GM12878 (cell line): ENCODE measurements at regions of chr2 and their contacts with region 1.

Region 1: DNA sequence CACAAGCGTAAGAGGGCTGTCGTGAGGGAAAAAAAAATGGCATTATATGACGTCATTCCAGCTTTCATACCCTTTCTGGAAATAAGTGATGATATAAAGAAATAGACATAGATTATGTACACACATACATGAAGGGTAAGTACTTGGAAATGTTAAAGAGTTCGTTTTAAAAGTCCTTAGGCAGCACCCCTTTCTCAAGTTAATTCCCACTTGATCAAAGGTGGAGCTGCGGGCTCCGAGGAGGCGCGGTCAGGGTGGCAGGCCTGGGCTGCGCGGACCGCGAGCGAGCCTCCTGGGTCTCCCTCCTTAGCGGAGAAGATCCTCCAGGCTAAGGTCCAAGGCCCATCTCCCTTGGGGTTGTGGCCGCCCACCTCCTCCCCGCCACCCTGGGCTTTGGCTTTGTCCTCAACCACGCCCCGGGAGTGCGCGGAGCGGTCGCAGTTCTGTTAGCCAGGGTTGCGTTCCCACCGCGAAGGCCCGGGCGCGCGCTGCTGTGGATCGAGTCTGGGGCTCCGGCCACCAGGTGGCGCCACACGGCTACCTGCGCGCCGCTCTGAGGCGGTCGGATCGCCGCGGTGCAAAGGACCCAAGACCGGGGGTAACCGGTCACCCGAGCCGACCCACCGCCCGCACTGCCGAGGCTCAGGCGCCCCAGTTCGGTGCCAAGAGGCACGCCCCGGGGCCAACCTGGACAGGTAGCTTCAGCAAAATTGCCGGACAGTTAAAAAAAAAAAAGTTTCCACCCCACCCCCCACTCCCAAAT is 66.8 kb downstream of the HNRNPLL start:
- DNase-seq: no peak
- ATAC-seq: peak; percentile 91
- H3K4me3 ChIP-seq: 0 out of 2 replicates have a peak overlapping the region, but pooled peaks have one; percentile 8
- H3K27ac ChIP-seq: no peak overlapping the region
- H3K4me1 ChIP-seq: peaks cover 14% of the 10 kb centered on the region
- H3K27me3 ChIP-seq: no peaks in the 10 kb centered on the region
- CTCF ChIP-seq: peak; percentile 73 to 87 (median 87)
- EP300 ChIP-seq: no peak
- POLR2A ChIP-seq: no peak
- RAD21 ChIP-seq: peak; percentile 75

Region 2: GRCh38 chr2:38523728-38524437 is 12.0 kb before region 1 on chr2:
- CTCF ChIA-PET with region 1: interaction called, 7 read pairs
- POLR2A ChIA-PET with region 1: interaction called, 3 read pairs
- RAD21 ChIA-PET with region 1: no interaction called
- SMC1A ChIA-PET with region 1: interaction called, 10 read pairs
- in situ Hi-C with region 1: no loop called
- intact Hi-C with region 1: no loop called
- DNase-seq: no peak
- ATAC-seq: no peak
- H3K4me3 ChIP-seq: no peak overlapping the region
- H3K27ac ChIP-seq: no peak overlapping the region
- H3K4me1 ChIP-seq: peaks cover 3% of the 10 kb centered on the region; the same call in 1 of the 2 replicates
- H3K27me3 ChIP-seq: peaks cover 0 to 2% of the 10 kb centered on the region in 2 experiments; a peak in 1 of 4 replicates
- CTCF ChIP-seq: no peak
- EP300 ChIP-seq: no peak
- POLR2A ChIP-seq: no peak
- RAD21 ChIP-seq: no peak

Region 3: GRCh38 chr2:38549071-38549704 is 13.3 kb after region 1 on chr2:
- CTCF ChIA-PET with region 1: interaction called, 14 read pairs
- POLR2A ChIA-PET with region 1: interaction called, 3 read pairs
- RAD21 ChIA-PET with region 1: no interaction called
- SMC1A ChIA-PET with region 1: interaction called, 5 read pairs
- in situ Hi-C with region 1: no loop called
- intact Hi-C with region 1: no loop called
- DNase-seq: no peak
- ATAC-seq: no peak
- H3K4me3 ChIP-seq: no peak overlapping the region
- H3K27ac ChIP-seq: no peak overlapping the region
- H3K4me1 ChIP-seq: no peaks in the 10 kb centered on the region
- H3K27me3 ChIP-seq: no peaks in the 10 kb centered on the region; a peak in 2 of 4 replicates
- CTCF ChIP-seq: no peak
- EP300 ChIP-seq: no peak
- POLR2A ChIP-seq: no peak
- RAD21 ChIP-seq: no peak

Region 4: DNA sequence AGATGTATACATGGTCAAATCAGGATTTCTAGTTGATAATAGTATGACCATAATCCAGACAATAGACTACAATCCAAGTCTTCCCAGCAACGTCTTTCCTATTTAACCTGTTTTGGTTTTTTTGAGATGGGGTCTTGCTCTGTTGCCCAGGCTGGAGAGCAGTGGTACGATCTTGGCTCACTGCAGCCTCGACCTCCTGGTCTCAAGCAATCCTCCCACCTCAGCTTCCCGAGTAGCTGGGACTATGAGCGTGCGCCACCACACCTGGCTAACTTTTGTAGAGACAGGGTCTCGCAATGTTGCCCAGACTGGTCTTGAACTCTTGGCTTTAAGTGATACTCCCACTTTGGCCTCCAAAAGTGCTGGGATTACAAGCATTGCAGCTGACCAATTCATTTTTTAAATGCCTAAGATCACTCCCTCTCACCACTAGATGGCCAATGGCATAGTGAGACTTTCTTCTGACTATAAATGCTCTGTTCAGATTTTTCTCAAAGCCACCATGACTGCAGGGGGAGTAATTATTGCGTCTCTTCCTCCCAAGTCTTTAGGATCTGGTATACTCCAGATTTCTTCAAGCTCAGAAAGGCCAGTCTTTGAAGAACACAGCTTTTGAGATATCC is 19.2 kb after region 1 on chr2:
- CTCF ChIA-PET with region 1: interaction called, 10 read pairs
- POLR2A ChIA-PET with region 1: no interaction called
- RAD21 ChIA-PET with region 1: no interaction called
- SMC1A ChIA-PET with region 1: interaction called, 6 read pairs
- in situ Hi-C with region 1: no loop called
- intact Hi-C with region 1: no loop called
- DNase-seq: no peak
- ATAC-seq: peak; percentile 76
- H3K4me3 ChIP-seq: no peak overlapping the region
- H3K27ac ChIP-seq: no peak overlapping the region
- H3K4me1 ChIP-seq: no peaks in the 10 kb centered on the region
- H3K27me3 ChIP-seq: no peaks in the 10 kb centered on the region
- CTCF ChIP-seq: peak; percentile 32 to 54 (median 46); a peak in 5 of 6 replicates
- EP300 ChIP-seq: no peak
- POLR2A ChIP-seq: no peak
- RAD21 ChIP-seq: peak; percentile 38

Region 5: GRCh38 chr2:38728694-38729093 is 192.8 kb after region 1 on chr2:
- CTCF ChIA-PET with region 1: interaction called, 6 read pairs
- POLR2A ChIA-PET with region 1: no interaction called
- RAD21 ChIA-PET with region 1: interaction called, 5 read pairs
- SMC1A ChIA-PET with region 1: interaction called, 4 read pairs
- in situ Hi-C with region 1: no loop called
- intact Hi-C with region 1: loop called (anchors 2 kb)
- DNase-seq: no peak
- ATAC-seq: no peak
- H3K4me3 ChIP-seq: no peak overlapping the region
- H3K27ac ChIP-seq: no peak overlapping the region
- H3K4me1 ChIP-seq: peaks cover 2% of the 10 kb centered on the region; the same call in 1 of the 2 replicates
- H3K27me3 ChIP-seq: no peaks in the 10 kb centered on the region
- CTCF ChIP-seq: no peak
- EP300 ChIP-seq: no peak
- POLR2A ChIP-seq: no peak
- RAD21 ChIP-seq: no peak

Region 6: DNA sequence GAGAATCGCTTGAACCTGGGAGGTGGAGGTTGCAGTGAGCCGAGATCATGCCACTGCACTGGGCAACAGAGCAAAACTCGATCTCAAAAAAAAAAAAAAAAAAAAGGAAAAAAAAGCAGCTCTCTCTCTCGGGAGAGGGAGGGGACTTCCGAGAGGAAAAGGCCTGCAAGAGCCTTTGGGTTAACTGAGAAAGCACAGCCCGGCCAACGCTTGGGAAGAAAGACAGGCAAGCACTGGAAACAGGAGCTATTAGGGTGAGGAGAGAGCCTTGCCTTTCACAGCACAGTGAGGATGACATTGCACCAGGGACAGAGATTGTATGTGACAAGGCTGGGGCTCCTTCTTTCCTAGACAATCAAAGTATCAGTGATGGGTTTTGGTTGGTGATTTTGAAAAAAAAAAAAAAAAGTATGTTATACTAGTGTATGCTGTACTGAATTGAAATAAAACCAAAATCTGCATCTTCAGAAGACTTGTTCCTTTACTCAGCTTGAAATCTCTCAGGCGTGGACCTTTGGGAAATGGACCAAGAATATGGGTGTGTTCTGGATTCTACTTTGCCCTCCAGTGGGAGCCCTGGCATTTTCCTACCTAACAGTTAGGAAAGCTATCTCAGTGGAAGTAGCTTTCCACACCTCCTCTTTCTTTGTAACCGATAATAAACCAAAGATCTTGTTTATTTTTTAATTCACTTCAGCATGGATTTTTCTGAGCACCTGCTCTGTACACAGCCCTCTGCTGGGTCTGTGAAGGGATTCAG is 198.6 kb after region 1 on chr2:
- CTCF ChIA-PET with region 1: interaction called, 3 read pairs
- POLR2A ChIA-PET with region 1: interaction called, 4 read pairs
- RAD21 ChIA-PET with region 1: interaction called, 3 read pairs
- SMC1A ChIA-PET with region 1: interaction called, 4 read pairs
- in situ Hi-C with region 1: loop called (anchors 5 kb)
- intact Hi-C with region 1: no loop called
- DNase-seq: no peak
- ATAC-seq: no peak
- H3K4me3 ChIP-seq: no peak overlapping the region
- H3K27ac ChIP-seq: no peak overlapping the region
- H3K4me1 ChIP-seq: no peaks in the 10 kb centered on the region
- H3K27me3 ChIP-seq: no peaks in the 10 kb centered on the region
- CTCF ChIP-seq: no peak
- EP300 ChIP-seq: no peak
- POLR2A ChIP-seq: no peak
- RAD21 ChIP-seq: no peak

Region 7: GRCh38 chr2:38740851-38741731 is 205.2 kb after region 1 on chr2:
- CTCF ChIA-PET with region 1: interaction called, 8 read pairs
- POLR2A ChIA-PET with region 1: interaction called, 4 read pairs
- RAD21 ChIA-PET with region 1: interaction called, 5 read pairs
- SMC1A ChIA-PET with region 1: interaction called, 12 read pairs
- in situ Hi-C with region 1: loop called (anchors 5 kb)
- intact Hi-C with region 1: no loop called
- DNase-seq: no peak
- ATAC-seq: peak; percentile 10
- H3K4me3 ChIP-seq: no peak overlapping the region
- H3K27ac ChIP-seq: no peak overlapping the region
- H3K4me1 ChIP-seq: no peaks in the 10 kb centered on the region
- H3K27me3 ChIP-seq: no peaks in the 10 kb centered on the region
- CTCF ChIP-seq: peak in 2 of 3 experiments; percentile 40 to 41; a peak in 4 of 6 replicates
- EP300 ChIP-seq: no peak
- POLR2A ChIP-seq: no peak; the same call in 1 of the 2 replicates
- RAD21 ChIP-seq: peak; percentile 41